ENCODE measurements at regions of chr22 and their contacts with region 1.

Region 1: DNA sequence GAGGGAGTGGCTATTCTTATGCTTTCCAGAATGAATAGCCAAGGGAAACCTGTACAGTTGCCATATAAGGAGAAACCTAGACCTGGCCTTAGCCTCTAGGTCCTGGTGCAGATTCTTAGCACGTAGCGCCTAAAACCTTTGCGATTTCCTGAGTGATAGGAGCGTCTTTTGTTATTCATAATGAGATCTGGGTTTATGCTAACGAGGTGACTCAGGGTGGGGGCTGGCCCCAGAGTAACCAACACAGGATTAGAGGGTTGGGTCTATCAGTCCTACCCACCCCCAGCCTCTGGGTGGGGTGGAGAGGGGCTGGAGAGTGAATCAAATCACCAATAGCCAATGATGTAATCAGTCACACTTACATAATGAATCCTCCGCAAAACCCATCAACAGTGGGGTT is 73.4 kb upstream of the PARVG start:
- DNase-seq: peak; percentile 66
- ATAC-seq: peak; percentile 93
- H3K4me3 Mint-ChIP-seq: no peak overlapping the region
- H3K27ac Mint-ChIP-seq: no peak overlapping the region
- H3K4me1 Mint-ChIP-seq: peaks cover 7% of the 10 kb centered on the region
- H3K27me3 Mint-ChIP-seq: no peaks in the 10 kb centered on the region

Region 2: GRCh38 chr22:44026630-44027511 is 80.5 kb before region 1 on chr22:
- CTCF ChIA-PET with region 1: no interaction called
- POLR2A ChIA-PET with region 1: no interaction called
- intact Hi-C with region 1: loop called in 1 of 2 experiments (anchors 1 kb)
- DNase-seq: peak; percentile 86
- ATAC-seq: peak; percentile 76
- H3K4me3 Mint-ChIP-seq: peak overlapping the region; percentile 78
- H3K27ac Mint-ChIP-seq: peak overlapping the region; percentile 93
- H3K4me1 Mint-ChIP-seq: peaks cover 41% of the 10 kb centered on the region
- H3K27me3 Mint-ChIP-seq: peaks cover 9% of the 10 kb centered on the region

Measured in activated CD4-positive, alpha-beta T cell treated with anti-CD3 and anti-CD28 coated beads for 36 hours (primary cell).